ENCODE measurements at regions of chr2 and their contacts with region 1.

Region 1: DNA sequence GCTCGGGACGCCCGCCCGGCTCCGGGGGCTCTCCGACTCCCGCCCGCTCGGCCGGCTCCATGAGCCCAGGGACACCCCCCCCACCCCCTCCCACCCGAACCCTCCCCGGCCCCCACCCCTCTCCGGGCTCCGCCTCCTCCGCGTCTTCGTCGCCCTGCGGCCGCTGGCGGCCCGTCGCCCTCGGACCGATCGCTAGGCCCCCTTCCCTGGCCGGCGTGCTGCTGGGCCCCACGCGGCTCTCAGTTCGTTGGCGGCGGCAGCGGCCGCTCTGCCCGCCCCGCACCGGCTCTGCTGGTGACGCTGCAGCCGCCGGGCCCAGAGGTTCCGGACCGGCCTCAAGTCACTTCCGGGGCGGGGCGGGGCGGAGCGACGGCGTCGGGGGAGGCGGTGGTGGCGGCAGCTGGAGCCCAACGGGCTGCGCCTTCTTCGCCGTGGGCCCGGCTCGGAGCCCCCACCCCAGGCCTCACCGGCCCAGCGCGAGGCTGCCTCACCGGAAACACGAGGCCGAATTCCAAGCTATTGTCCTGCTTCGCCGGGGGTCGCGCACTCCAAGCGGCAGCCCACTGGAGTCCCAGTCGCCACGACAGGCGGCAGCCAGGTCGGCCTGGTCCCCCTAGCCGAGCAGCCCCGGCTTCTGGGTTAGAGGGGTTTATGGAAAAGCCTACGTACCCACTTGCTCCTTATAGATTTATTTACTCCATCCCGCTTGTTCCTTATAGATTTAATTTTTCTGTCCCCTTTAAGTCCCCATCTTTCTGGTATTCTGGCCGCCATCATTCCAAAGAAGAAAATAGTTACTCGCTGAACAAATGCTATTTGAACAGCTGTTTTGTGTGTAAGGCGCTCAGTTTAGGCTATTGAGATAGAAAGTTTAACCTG is at the start of gene PSME4:
- DNase-seq: peak; percentile 94 to 97 (median 95)
- H3K4me3 ChIP-seq: peak within 1 kb of the TSS; percentile 68
- H3K27ac ChIP-seq: peak within 1 kb of the TSS; percentile 87 to 93
- H3K4me1 ChIP-seq: peaks cover 3% of the 10 kb centered on the region
- H3K27me3 ChIP-seq: no peaks in the 10 kb centered on the region
- CTCF ChIP-seq: no peak
- EP300 ChIP-seq: no peak
- POLR2A ChIP-seq: peak; percentile 97
- total RNA-seq, gene PSME4: 26.1 to 52.1 (median 33.3) TPM

Region 2: DNA sequence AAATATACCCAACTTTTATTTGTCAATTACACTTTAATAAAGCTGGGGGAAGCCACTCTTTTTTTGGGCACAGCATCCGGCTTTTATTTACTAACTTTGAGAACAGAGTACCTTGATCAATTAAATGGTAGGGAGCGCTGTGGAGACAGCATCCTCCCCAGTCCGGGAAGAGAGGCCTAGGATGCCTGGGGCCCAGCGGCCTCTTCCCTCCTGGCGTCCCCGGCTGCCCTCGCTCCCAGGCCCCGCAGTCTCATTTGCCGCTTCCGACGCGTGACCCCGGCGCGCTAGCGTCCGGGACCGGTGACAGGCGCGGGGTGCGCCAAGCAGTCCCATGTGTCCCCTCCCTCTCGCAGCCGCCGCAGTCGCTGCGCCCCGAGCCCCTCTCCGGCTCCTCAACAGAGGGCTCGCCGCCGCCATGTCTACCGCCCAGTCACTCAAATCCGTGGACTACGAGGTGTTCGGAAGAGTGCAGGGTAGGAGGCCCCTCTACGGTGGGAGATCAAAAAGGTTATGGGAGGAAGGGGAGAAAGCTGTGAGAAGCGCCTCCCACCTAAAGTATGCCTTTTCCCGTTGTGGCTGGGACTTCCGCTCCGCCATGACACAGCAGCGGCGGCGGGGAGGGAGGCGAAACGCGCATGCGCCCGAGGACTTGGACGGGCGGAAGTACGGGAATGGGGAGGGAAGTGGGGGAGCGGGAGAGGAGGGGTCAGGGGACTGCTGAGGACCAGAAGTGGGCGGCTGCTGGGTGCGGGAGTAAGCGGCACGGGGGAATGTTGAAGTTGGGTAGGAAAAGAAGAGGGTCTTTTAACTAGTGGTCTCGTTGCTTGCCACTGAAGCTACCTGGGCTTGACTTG is 144.5 kb after region 1 on chr2 and contains the start of gene ACYP2:
- intact Hi-C with region 1: loop called in 1 of 4 experiments (anchors 10 kb)
- DNase-seq: peak; percentile 94 to 97 (median 96)
- H3K4me3 ChIP-seq: peak within 1 kb of the TSS; percentile 80
- H3K27ac ChIP-seq: peak within 1 kb of the TSS; percentile 96 to 99
- H3K4me1 ChIP-seq: peaks cover 2% of the 10 kb centered on the region
- H3K27me3 ChIP-seq: no peaks in the 10 kb centered on the region
- CTCF ChIP-seq: peak in 1 of 3 donors; percentile 20
- EP300 ChIP-seq: no peak
- POLR2A ChIP-seq: peak; percentile 92
- total RNA-seq, gene ACYP2: 10.4 to 18.5 (median 12.8) TPM

Measured in ovary (tissue), 10 donors.